ENCODE measurements at regions of chr12 and their contacts with region 1.

Region 1: GRCh38 chr12:107317751-107318613 is 224.6 kb upstream of the CRY1 start:
- DNase-seq: peak; percentile 85 to 92
- H3K4me3 ChIP-seq: peak overlapping the region; percentile 65
- H3K27ac ChIP-seq: peak overlapping the region; percentile 41
- H3K4me1 ChIP-seq: peaks cover 9% of the 10 kb centered on the region
- H3K27me3 ChIP-seq: no peaks in the 10 kb centered on the region
- CTCF ChIP-seq: peak; percentile 66; the same call in 1 of the 2 replicates

Region 2: GRCh38 chr12:107296681-107297089 is 21.3 kb before region 1 on chr12:
- CTCF ChIA-PET with region 1: no interaction called
- POLR2A ChIA-PET with region 1: no interaction called
- intact Hi-C with region 1: loop called (anchors 2 kb)
- DNase-seq: peak in 1 of 2 experiments; percentile 9
- H3K4me3 ChIP-seq: no peak overlapping the region
- H3K27ac ChIP-seq: no peak overlapping the region
- H3K4me1 ChIP-seq: peaks cover 25% of the 10 kb centered on the region
- H3K27me3 ChIP-seq: no peaks in the 10 kb centered on the region
- CTCF ChIP-seq: no peak

Region 3: GRCh38 chr12:107349008-107349747 is 31.2 kb after region 1 on chr12:
- CTCF ChIA-PET with region 1: no interaction called
- POLR2A ChIA-PET with region 1: no interaction called
- intact Hi-C with region 1: loop called (anchors 2 kb)
- DNase-seq: peak; percentile 87 to 98
- H3K4me3 ChIP-seq: peak overlapping the region; percentile 18; the same call in 1 of the 2 replicates
- H3K27ac ChIP-seq: peak overlapping the region; percentile 97
- H3K4me1 ChIP-seq: peaks cover 95% of the 10 kb centered on the region
- H3K27me3 ChIP-seq: no peaks in the 10 kb centered on the region
- CTCF ChIP-seq: no peak

Region 4: DNA sequence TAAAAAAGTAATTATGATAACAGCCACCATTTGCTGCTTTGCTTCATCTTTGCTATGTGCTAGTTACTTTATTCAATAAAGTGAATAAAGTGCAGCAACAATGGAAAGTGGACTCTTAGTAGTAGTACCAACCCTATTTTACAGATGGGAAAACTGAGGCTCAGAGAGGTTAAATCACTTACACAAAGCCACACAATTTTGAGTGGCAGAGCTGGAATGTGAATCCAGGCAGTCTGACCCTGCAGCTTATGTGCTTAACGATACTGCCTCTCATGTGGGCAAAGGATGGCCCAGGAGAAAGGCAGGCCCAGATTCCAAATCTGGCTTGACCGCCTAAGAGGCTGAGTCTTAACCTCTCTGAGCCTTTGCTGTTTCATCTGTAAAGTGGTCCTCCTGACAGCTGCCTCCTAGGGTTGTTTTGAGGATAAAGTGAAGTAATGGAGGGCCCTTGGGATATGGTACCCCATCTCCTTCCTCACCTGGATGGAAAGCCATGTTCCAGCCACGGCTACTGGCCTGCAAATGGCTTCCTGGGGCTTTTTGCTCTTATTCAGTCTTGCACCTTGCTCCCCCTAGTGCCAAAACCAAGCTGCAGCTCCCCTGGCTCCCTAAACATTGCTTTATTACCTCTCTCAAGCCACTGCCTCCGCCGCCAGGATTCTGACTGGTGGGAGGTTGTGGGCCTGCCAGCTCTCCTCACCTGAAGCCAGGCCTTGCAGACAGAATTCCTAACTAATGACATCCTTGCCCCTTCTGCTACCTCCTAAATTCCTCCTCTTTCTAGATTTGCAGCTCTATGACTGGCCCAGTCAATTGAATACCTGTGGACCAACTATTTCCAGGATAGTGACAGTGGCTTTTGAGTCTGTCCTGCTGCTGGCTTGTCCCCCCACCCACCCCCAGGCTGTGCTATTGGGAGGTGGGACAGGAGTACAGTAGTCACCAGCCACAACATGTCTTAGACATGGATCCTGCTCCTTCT is 84.3 kb after region 1 on chr12:
- CTCF ChIA-PET with region 1: interaction called, 4 read pairs
- POLR2A ChIA-PET with region 1: interaction called, 5 read pairs
- intact Hi-C with region 1: loop called (anchors 1 kb)
- DNase-seq: peak; percentile 69 to 70
- H3K4me3 ChIP-seq: no peak overlapping the region
- H3K27ac ChIP-seq: no peak overlapping the region
- H3K4me1 ChIP-seq: peaks cover 14% of the 10 kb centered on the region
- H3K27me3 ChIP-seq: no peaks in the 10 kb centered on the region
- CTCF ChIP-seq: peak; percentile 79

Region 5: GRCh38 chr12:107607464-107608392 is 289.7 kb after region 1 on chr12:
- CTCF ChIA-PET with region 1: interaction called, 3 read pairs
- POLR2A ChIA-PET with region 1: no interaction called
- intact Hi-C with region 1: loop called (anchors 1 kb)
- DNase-seq: peak; percentile 57 to 71
- H3K4me3 ChIP-seq: no peak overlapping the region
- H3K27ac ChIP-seq: no peak overlapping the region
- H3K4me1 ChIP-seq: no peaks in the 10 kb centered on the region
- H3K27me3 ChIP-seq: no peaks in the 10 kb centered on the region
- CTCF ChIP-seq: peak; percentile 96

Measured in PC-9 (cell line).